ENCODE measurements at regions of chr4 and their contacts with region 1.

Region 1: GRCh38 chr4:128809477-128810330 is at the start of gene JADE1:
- DNase-seq: peak; percentile 79
- ATAC-seq: peak; percentile 69
- H3K4me3 Mint-ChIP-seq: peak within 1 kb of the TSS; percentile 97
- H3K27ac Mint-ChIP-seq: peak within 1 kb of the TSS; percentile 98
- H3K4me1 Mint-ChIP-seq: peaks cover 15% of the 10 kb centered on the region
- H3K27me3 Mint-ChIP-seq: no peaks in the 10 kb centered on the region
- CTCF ChIP-seq: no peak
- total RNA-seq, gene JADE1: 26.2 and 29.2 TPM in 2 replicates

Region 2: GRCh38 chr4:127880764-127881562 is 928.7 kb before region 1 on chr4 and contains the start of gene PLK4:
- CTCF ChIA-PET with region 1: no interaction called
- POLR2A ChIA-PET with region 1: interaction called, 3 read pairs
- intact Hi-C with region 1: loop called (anchors 1 kb)
- DNase-seq: peak; percentile 88
- ATAC-seq: peak; percentile 97
- H3K4me3 Mint-ChIP-seq: peak within 1 kb of the TSS; percentile 94
- H3K27ac Mint-ChIP-seq: peak within 1 kb of the TSS; percentile 97
- H3K4me1 Mint-ChIP-seq: peaks cover 18% of the 10 kb centered on the region
- H3K27me3 Mint-ChIP-seq: no peaks in the 10 kb centered on the region
- CTCF ChIP-seq: no peak
- total RNA-seq, gene PLK4: 3.4 and 3.8 TPM in 2 replicates

Region 3: GRCh38 chr4:128177498-128177897 is 632.2 kb before region 1 on chr4:
- CTCF ChIA-PET with region 1: no interaction called
- POLR2A ChIA-PET with region 1: no interaction called
- intact Hi-C with region 1: no loop called
- DNase-seq: no peak
- ATAC-seq: no peak
- H3K4me3 Mint-ChIP-seq: no peak overlapping the region
- H3K27ac Mint-ChIP-seq: no peak overlapping the region
- H3K4me1 Mint-ChIP-seq: peaks cover 8% of the 10 kb centered on the region
- H3K27me3 Mint-ChIP-seq: no peaks in the 10 kb centered on the region
- CTCF ChIP-seq: no peak

Region 4: DNA sequence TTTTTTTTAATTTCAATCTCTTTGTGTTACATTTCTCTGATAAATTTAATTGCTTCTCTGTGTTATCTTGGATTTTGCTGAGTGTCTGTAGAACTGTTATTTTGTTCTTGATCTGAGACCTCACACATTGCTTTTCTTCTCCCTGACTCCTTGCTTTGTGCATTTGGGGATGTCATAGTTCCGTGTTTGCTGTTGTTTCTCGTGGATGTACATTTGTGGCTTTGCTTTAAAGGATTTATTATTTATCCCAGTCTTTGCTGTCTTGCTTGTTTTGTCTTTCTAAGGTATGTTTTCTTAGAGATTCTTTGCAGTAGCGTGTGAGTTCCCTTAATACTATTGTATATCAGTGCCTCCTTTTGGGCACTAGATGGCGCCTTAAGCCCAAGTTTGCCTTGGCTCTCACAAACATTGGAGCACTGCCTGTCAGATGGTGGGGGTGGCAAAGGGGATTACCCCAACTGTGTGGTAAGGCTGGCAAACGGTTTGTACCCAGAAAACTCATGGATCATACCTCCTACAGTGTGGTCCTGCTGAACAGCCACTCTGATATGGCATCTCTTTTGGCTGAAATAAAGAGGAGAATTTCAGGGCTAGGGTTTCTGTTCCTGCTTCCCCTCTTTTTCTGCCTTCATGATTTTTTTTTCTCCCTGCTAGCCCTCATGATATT is 618.5 kb before region 1 on chr4:
- CTCF ChIA-PET with region 1: no interaction called
- POLR2A ChIA-PET with region 1: no interaction called
- intact Hi-C with region 1: loop called (anchors 1 kb)
- DNase-seq: peak; percentile 31
- ATAC-seq: peak; percentile 92
- H3K4me3 Mint-ChIP-seq: no peak overlapping the region
- H3K27ac Mint-ChIP-seq: no peak overlapping the region
- H3K4me1 Mint-ChIP-seq: no peaks in the 10 kb centered on the region
- H3K27me3 Mint-ChIP-seq: no peaks in the 10 kb centered on the region
- CTCF ChIP-seq: peak; percentile 79

Region 5: GRCh38 chr4:128574706-128575105 is 235.0 kb before region 1 on chr4:
- CTCF ChIA-PET with region 1: no interaction called
- POLR2A ChIA-PET with region 1: no interaction called
- intact Hi-C with region 1: loop called (anchors 1 kb)
- DNase-seq: peak; percentile 20
- ATAC-seq: peak; percentile 45
- H3K4me3 Mint-ChIP-seq: no peak overlapping the region
- H3K27ac Mint-ChIP-seq: no peak overlapping the region
- H3K4me1 Mint-ChIP-seq: no peaks in the 10 kb centered on the region
- H3K27me3 Mint-ChIP-seq: no peaks in the 10 kb centered on the region
- CTCF ChIP-seq: no peak

Region 6: DNA sequence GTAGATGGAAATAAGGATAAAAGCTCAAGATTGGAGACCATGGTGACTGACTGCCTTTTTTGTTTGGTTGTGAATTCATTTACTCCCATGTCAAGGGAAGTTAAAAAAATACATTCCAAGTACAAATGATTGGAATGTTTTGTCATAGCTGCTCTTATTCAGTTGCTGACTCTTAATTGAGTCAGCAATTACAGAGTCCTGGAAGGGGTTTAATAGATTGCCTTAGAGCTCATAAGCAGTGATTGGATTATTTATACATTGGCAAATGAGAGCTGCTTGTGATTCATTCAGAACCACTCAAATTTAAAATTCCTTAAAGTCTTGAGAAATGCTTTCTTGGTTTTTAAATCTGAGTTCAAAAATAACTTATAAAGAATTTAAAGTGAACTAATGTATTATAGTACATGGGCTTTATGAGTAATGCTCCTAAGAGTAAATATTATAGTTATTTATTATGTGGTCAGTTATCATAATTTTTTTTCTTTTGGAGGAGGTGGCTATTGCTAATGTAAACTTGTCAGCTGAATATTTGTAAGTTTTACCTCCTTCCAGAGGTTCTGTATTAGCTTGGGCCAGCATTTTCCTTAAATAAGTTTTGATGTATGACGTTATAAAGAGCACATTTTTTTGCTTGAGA is 13.4 kb after region 1 on chr4:
- CTCF ChIA-PET with region 1: interaction called, 6 read pairs
- POLR2A ChIA-PET with region 1: interaction called, 14 read pairs
- intact Hi-C with region 1: loop called (anchors 1 kb)
- DNase-seq: no peak
- ATAC-seq: no peak
- H3K4me3 Mint-ChIP-seq: no peak overlapping the region
- H3K27ac Mint-ChIP-seq: no peak overlapping the region
- H3K4me1 Mint-ChIP-seq: peaks cover 57% of the 10 kb centered on the region
- H3K27me3 Mint-ChIP-seq: no peaks in the 10 kb centered on the region
- CTCF ChIP-seq: no peak

Region 7: DNA sequence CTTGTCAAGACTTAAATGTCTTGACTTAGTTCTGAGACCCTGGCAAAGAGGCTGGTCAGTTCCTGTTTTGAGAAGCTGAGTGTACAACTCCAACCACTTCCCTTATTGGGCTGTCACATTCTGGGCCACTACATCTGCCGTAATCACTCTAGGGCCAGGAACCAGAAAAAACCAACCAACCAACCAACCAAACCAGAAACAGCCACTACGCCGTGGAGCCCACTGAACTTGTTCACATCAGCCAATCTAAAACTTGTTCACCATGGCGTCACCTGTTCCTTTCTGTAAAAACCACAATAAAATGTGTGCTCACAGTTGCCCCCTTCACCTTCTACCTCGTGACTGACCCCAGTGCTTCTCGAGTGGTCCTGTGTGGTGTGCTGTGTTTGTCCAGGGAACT is 107.1 kb after region 1 on chr4:
- CTCF ChIA-PET with region 1: no interaction called
- POLR2A ChIA-PET with region 1: no interaction called
- intact Hi-C with region 1: loop called (anchors 5 kb)
- DNase-seq: peak; percentile 16
- ATAC-seq: peak; percentile 93
- H3K4me3 Mint-ChIP-seq: peak overlapping the region; percentile 55
- H3K27ac Mint-ChIP-seq: peak overlapping the region; percentile 79
- H3K4me1 Mint-ChIP-seq: peaks cover 23% of the 10 kb centered on the region
- H3K27me3 Mint-ChIP-seq: no peaks in the 10 kb centered on the region
- CTCF ChIP-seq: no peak